Activated CD8-positive, alpha-beta T cell treated with anti-CD3 and anti-CD28 coated beads for 36 hours (primary cell): ENCODE measurements at regions of chrX and their contacts with region 1.

Region 1: GRCh38 chrX:12771445-12772069 is 19.7 kb upstream of the PRPS2 start:
- DNase-seq: peak; percentile 84
- ATAC-seq: peak; percentile 100
- H3K4me3 Mint-ChIP-seq: no peak overlapping the region
- H3K27ac Mint-ChIP-seq: no peak overlapping the region
- H3K4me1 Mint-ChIP-seq: peaks cover 2% of the 10 kb centered on the region
- H3K27me3 Mint-ChIP-seq: peaks cover 10% of the 10 kb centered on the region
- CTCF ChIP-seq: peak; percentile 63

Region 2: DNA sequence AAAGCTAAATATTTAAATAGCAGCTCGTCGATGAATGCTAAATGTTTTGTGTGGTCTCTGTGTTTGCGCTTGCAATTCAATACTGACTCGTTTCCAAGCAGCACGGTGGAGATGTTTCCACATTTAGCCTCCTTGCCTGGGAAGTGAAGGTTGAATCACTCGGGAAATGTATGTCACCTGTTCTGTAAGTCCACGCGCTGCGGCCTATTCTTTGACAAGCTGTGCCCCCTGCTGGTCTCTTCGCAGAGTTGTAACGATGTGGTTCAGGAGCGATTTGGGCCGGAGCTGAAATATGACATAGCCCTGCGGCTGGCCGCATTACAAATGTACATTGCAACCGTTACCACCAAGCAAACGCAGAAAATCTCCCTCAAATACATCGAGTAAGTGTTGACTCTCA is 69.9 kb before region 1 on chrX:
- CTCF ChIA-PET with region 1: interaction called, 15 read pairs
- POLR2A ChIA-PET with region 1: no interaction called
- intact Hi-C with region 1: no loop called
- DNase-seq: peak; percentile 58
- ATAC-seq: peak; percentile 42
- H3K4me3 Mint-ChIP-seq: no peak overlapping the region
- H3K27ac Mint-ChIP-seq: no peak overlapping the region
- H3K4me1 Mint-ChIP-seq: no peaks in the 10 kb centered on the region
- H3K27me3 Mint-ChIP-seq: peaks cover 3% of the 10 kb centered on the region
- CTCF ChIP-seq: peak; percentile 41

Region 3: DNA sequence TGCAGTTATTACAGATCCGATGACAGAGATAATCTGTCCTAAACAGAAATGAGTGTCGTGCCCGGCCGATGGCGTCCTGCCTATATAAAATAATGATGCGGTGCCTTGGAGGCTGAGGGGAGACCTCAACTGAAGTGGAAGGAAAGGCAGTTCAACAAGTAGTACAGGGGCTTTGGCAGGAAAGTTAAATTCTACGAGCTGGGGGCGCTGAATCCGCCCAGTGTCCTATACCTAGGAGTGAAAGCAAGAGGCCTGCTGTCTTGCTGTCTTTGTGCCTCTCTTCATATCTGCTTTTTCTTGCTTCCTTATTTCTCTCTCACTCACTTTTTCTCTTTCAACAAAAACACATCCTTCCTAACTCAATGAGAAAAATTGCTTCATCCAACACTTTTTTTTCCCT is 62.5 kb before region 1 on chrX:
- CTCF ChIA-PET with region 1: interaction called, 10 read pairs
- POLR2A ChIA-PET with region 1: interaction called, 3 read pairs
- intact Hi-C with region 1: loop called (anchors 2 kb)
- DNase-seq: peak; percentile 52
- ATAC-seq: no peak
- H3K4me3 Mint-ChIP-seq: no peak overlapping the region
- H3K27ac Mint-ChIP-seq: no peak overlapping the region
- H3K4me1 Mint-ChIP-seq: no peaks in the 10 kb centered on the region
- H3K27me3 Mint-ChIP-seq: no peaks in the 10 kb centered on the region
- CTCF ChIP-seq: peak; percentile 21

Region 4: DNA sequence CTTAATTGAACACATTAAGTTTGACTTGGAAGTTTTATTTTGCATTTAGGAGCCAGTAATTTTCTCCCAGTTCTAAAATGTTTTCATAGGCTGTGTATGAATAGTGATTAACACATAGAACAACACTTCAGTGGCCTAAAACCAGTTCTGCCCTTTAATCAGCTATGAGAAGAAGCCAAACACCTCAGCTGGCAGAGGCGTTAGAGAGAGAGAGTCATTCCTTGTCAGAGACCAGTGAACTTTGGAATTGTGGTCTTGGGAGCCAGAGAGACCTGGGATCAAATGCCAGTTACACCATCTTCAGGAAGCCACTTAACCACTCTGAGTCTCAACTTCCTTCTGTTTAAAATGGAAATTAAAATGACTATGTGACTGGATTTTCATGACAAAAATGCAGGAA is 19.7 kb before region 1 on chrX:
- CTCF ChIA-PET with region 1: interaction called, 17 read pairs
- POLR2A ChIA-PET with region 1: no interaction called
- intact Hi-C with region 1: no loop called
- DNase-seq: no peak
- ATAC-seq: no peak
- H3K4me3 Mint-ChIP-seq: no peak overlapping the region
- H3K27ac Mint-ChIP-seq: no peak overlapping the region
- H3K4me1 Mint-ChIP-seq: no peaks in the 10 kb centered on the region
- H3K27me3 Mint-ChIP-seq: no peaks in the 10 kb centered on the region
- CTCF ChIP-seq: no peak

Region 5: DNA sequence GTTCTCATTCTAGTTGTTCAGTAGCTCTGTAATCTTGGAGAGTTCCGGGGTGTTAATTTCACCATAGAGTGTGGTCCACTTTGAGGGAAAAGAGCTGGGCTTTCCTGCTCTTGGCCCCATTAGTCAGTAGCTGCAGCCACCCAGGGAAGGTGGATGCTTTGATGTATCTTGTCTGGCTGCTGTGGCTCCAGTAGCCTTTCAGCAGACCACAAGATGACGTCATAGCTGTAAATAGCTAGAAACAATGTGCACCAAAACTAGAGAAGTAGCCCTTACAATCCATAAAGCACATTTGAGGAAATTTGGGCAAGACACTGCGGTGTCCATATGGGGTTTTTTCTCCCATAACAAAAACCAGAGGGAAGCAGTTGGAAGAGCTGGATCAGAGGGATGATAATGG is 13.3 kb before region 1 on chrX:
- CTCF ChIA-PET with region 1: interaction called, 17 read pairs
- POLR2A ChIA-PET with region 1: no interaction called
- intact Hi-C with region 1: no loop called
- DNase-seq: no peak
- ATAC-seq: no peak
- H3K4me3 Mint-ChIP-seq: no peak overlapping the region
- H3K27ac Mint-ChIP-seq: no peak overlapping the region
- H3K4me1 Mint-ChIP-seq: no peaks in the 10 kb centered on the region
- H3K27me3 Mint-ChIP-seq: peaks cover 1% of the 10 kb centered on the region
- CTCF ChIP-seq: no peak

Region 6: DNA sequence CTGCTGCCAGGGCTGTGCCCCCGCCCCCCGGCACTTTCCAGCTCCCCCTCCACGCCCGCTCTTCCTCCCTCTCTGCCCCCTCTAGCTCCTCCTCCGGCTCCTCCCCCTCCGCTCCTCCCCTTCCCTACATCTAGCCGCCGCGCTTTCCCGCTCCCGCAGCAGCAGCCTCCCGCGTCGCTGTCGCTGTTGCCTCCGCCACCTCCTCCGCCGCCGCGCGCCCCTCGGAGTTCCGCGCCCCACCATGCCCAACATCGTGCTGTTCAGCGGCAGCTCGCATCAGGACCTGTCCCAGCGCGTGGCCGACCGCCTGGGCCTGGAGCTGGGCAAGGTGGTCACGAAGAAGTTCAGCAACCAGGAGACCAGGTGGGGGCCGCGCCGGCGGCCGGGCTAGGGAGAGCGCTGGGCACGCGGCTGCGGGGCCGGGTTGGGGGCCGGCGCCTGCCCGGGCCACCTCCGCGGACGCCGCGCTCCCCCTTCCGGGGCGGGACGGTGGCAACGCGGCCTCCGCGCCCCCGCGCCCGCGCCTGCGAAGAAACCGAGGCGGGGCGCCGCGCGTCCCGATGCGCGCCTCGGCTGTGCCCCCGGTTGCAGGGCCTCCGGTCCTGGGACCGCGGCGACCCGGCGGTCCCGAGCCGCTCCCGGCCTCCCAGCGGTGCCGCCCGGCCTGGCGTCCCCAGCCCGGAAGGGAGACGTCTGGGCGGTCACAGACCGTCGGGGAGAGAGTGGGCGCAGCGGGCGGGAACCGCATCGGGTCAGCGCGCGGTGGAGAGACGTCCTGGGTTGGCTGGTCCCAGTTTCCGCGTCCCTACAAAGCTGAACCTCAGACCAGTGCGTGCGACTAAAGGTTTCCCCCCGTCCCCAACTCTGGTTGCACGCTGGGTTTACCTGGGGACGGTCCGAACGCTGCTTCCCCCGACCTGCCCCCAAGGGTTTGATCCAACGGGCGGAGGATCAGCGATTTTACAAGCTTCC is 20.0 kb after region 1 on chrX and contains the start of gene PRPS2:
- CTCF ChIA-PET with region 1: interaction called, 35 read pairs
- POLR2A ChIA-PET with region 1: no interaction called
- intact Hi-C with region 1: no loop called
- DNase-seq: peak; percentile 78
- ATAC-seq: peak; percentile 91
- H3K4me3 Mint-ChIP-seq: peak within 1 kb of the TSS; percentile 82
- H3K27ac Mint-ChIP-seq: peak within 1 kb of the TSS; percentile 86
- H3K4me1 Mint-ChIP-seq: peaks cover 27% of the 10 kb centered on the region
- H3K27me3 Mint-ChIP-seq: no peaks in the 10 kb centered on the region
- CTCF ChIP-seq: no peak
- total RNA-seq, gene PRPS2: 110 to 114 TPM